Activated B cell treated with CpG ODN at 0.5 μM for 24 hours (primary cell): ENCODE measurements at regions of chr3 and their contacts with region 1.

Region 1: DNA sequence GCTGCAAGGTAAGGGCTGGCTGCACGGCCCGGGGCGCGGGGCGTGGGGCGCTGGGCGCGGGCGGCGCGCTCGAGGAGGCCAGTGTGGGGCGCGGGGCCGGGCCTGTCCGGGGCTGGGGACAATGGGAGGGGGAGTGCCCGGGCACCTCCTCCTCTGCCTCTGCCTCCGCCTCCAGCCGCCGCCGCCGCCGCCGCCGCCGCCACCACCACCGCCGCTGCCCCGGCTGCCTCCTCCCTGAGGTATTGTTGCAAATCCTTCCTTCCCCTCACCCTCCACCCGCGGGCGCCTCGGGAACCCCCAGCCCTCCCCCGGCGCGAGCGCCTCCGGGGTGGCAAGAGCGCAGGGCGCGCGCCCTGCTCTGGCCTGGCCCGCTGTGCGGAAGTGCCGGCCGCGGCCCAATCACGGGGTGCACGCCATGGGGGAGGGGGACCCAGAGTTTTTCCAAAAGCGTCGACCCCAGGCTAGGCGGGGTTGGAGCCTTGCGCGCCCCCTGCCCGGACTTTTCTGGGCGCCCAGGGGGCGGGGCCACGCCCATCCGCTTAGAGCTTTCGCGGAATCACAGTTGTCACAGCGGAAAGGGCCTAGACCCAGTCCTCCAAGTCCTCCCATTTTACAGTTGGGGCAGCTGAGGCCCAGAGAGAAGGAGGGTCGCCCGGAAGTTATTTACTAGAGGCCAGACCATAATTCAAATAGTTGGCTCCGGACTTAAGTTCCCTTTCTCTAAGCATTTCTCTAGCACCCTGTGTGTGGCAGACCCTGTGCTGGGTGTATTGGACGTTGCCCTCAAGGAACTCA is at the start of gene LPP:
- DNase-seq: peak; percentile 88
- ATAC-seq: peak; percentile 89
- H3K4me3 Mint-ChIP-seq: peak within 1 kb of the TSS; percentile 96
- H3K27ac Mint-ChIP-seq: peak within 1 kb of the TSS; percentile 92
- H3K4me1 Mint-ChIP-seq: peaks cover 51% of the 10 kb centered on the region
- H3K27me3 Mint-ChIP-seq: no peaks in the 10 kb centered on the region
- CTCF ChIP-seq: no peak
- total RNA-seq, gene LPP: 49.5 and 60.1 TPM in 2 replicates

Region 2: GRCh38 chr3:187648177-187648576 is 506.0 kb before region 1 on chr3:
- CTCF ChIA-PET with region 1: no interaction called
- POLR2A ChIA-PET with region 1: no interaction called
- intact Hi-C with region 1: no loop called
- DNase-seq: no peak
- ATAC-seq: no peak
- H3K4me3 Mint-ChIP-seq: no peak overlapping the region
- H3K27ac Mint-ChIP-seq: no peak overlapping the region
- H3K4me1 Mint-ChIP-seq: no peaks in the 10 kb centered on the region
- H3K27me3 Mint-ChIP-seq: peaks cover 22% of the 10 kb centered on the region
- CTCF ChIP-seq: no peak

Region 3: DNA sequence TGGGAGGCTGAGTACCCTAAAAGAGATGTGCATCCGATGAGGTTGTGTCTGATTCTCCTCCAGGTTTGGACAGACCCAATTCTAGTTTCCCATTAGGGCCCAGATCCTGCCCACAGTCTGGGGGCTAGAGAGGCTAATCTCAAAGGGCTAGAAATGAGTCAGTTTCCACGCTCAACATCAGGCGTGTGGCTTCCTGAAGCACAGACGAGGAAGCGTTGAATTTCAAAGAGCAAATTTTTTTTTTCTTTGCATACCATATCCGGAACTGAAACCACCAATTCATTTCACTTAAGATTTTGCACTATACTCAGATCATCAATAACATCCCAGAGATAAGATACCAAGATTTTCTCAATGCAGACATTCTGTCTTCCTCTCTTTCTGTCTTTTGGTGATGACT is 235.2 kb before region 1 on chr3:
- CTCF ChIA-PET with region 1: no interaction called
- POLR2A ChIA-PET with region 1: no interaction called
- intact Hi-C with region 1: loop called (anchors 1 kb)
- DNase-seq: peak; percentile 36
- ATAC-seq: peak; percentile 89
- H3K4me3 Mint-ChIP-seq: peak overlapping the region; percentile 77
- H3K27ac Mint-ChIP-seq: peak overlapping the region; percentile 86
- H3K4me1 Mint-ChIP-seq: peaks cover 32% of the 10 kb centered on the region
- H3K27me3 Mint-ChIP-seq: peaks cover 15% of the 10 kb centered on the region
- CTCF ChIP-seq: no peak

Region 4: GRCh38 chr3:188164248-188164687 is 10.1 kb after region 1 on chr3:
- CTCF ChIA-PET with region 1: no interaction called
- POLR2A ChIA-PET with region 1: interaction called, 10 read pairs
- intact Hi-C with region 1: no loop called
- DNase-seq: no peak
- ATAC-seq: peak; percentile 54
- H3K4me3 Mint-ChIP-seq: peak overlapping the region; percentile 53
- H3K27ac Mint-ChIP-seq: peak overlapping the region; percentile 38
- H3K4me1 Mint-ChIP-seq: peaks cover 40% of the 10 kb centered on the region
- H3K27me3 Mint-ChIP-seq: no peaks in the 10 kb centered on the region
- CTCF ChIP-seq: no peak

Region 5: GRCh38 chr3:188244395-188244861 is 90.2 kb after region 1 on chr3:
- CTCF ChIA-PET with region 1: interaction called, 3 read pairs
- POLR2A ChIA-PET with region 1: interaction called, 5 read pairs
- intact Hi-C with region 1: loop called (anchors 1 kb)
- DNase-seq: no peak
- ATAC-seq: peak; percentile 78
- H3K4me3 Mint-ChIP-seq: peak overlapping the region; percentile 24
- H3K27ac Mint-ChIP-seq: peak overlapping the region; percentile 62
- H3K4me1 Mint-ChIP-seq: peaks cover 74% of the 10 kb centered on the region
- H3K27me3 Mint-ChIP-seq: no peaks in the 10 kb centered on the region
- CTCF ChIP-seq: no peak

Region 6: DNA sequence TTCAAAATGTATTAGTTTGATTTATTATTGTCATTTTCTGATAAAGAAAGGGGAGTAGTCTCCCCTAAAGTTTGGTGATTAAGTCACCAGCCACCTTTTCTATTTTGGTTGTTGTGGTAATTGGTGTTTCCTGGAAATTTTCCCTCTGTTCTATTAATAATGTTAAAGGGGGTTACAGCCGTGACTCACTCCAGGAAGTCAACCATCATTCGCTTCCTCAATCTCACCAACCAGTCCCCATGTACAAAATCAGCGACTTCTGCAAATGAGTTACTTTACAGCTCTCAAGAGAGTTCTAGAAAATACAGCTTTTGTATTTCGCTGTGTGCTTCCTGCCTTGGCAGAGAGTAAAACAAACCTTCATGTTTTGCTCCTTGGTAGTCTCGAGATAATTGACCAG is 284.9 kb after region 1 on chr3:
- CTCF ChIA-PET with region 1: no interaction called
- POLR2A ChIA-PET with region 1: interaction called, 4 read pairs
- intact Hi-C with region 1: loop called (anchors 5 kb)
- DNase-seq: no peak
- ATAC-seq: peak; percentile 85
- H3K4me3 Mint-ChIP-seq: peak overlapping the region; percentile 52
- H3K27ac Mint-ChIP-seq: peak overlapping the region; percentile 88
- H3K4me1 Mint-ChIP-seq: peaks cover 95% of the 10 kb centered on the region
- H3K27me3 Mint-ChIP-seq: no peaks in the 10 kb centered on the region
- CTCF ChIP-seq: no peak